ENCODE measurements at regions of chr15 and their contacts with region 1.

Region 1: DNA sequence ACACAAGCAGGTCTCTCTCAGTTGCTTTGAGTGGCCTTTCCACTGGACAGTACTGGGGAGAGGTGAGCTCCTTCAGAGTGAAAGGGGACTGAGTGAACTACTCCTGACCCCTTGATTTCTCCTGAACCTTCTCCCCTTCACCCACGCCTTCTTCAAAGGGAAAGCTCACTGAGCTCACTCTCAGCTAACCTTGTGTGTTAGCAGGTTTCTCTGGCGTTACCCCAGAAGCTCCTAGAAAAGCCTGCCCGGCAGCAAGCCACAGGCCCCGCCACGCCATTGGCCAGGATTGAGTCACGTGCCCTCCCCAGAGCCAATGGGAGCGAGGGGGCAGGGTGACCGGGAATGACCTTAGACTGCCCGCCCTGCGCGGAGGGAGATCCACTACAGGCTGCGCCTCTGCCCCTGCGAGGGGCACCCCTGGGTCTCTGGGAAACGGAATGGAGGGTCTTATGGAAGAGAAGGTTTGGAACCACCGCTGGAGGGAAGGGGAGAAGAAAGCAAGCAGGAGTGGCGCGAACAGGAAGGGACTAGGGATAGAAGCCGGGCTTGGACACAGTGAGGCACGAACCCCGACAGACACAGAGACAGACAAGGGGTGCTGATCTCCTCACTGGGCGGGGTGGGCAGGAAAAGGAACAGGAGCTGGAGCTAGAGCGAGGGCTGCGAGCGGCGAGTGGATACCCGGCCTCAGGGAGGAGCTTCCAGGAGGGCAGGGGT is 17.4 kb upstream of the CLK3 start:
- DNase-seq: peak; percentile 92
- H3K4me3 Mint-ChIP-seq: peak overlapping the region; percentile 80
- H3K27ac Mint-ChIP-seq: peak overlapping the region; percentile 88
- H3K4me1 Mint-ChIP-seq: peaks cover 9% of the 10 kb centered on the region
- H3K27me3 Mint-ChIP-seq: no peaks in the 10 kb centered on the region
- CTCF ChIP-seq: no peak

Region 2: DNA sequence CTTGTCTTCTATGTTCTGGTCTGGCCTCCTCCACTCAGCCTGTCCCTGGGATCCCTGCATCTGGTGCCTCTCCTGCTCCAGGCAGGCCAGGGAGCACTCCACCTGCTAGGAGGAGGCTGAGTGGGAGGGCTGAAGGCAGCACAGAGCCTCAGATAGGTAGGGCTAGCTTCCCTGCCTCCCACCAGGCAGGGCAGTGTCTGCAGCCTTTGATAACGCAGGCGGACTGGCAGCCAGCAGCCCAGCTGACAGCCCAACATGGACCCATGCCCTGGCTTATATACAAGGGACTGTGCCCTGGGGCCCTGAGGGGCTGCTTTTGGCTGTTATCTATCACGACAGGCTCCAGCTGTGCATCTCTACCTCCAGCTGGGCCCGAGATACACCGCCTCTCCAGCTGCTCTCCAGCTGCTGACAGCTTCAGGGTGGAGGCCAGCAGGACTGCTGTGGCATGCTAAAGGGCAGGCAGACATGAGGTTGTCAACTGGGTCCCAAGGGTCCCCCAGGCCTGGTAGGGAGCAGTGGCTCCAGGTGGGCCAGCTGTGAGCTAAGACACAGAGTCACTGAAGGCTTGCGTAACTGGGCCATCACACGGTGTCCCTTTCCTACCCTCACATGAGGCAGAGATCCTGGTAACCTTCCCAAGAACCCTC is 12.1 kb after region 1 on chr15:
- CTCF ChIA-PET with region 1: interaction called, 3 read pairs
- POLR2A ChIA-PET with region 1: interaction called, 21 read pairs
- intact Hi-C with region 1: no loop called
- DNase-seq: no peak
- H3K4me3 Mint-ChIP-seq: no peak overlapping the region
- H3K27ac Mint-ChIP-seq: no peak overlapping the region
- H3K4me1 Mint-ChIP-seq: no peaks in the 10 kb centered on the region
- H3K27me3 Mint-ChIP-seq: peaks cover 16% of the 10 kb centered on the region
- CTCF ChIP-seq: no peak